ENCODE measurements at regions of chr1 and their contacts with region 1.

Region 1: GRCh38 chr1:204207136-204207616 is 6.6 kb downstream of the GOLT1A start:
- DNase-seq: no peak
- H3K4me3 ChIP-seq: no peak overlapping the region
- CTCF ChIP-seq: peak; percentile 94

Region 2: DNA sequence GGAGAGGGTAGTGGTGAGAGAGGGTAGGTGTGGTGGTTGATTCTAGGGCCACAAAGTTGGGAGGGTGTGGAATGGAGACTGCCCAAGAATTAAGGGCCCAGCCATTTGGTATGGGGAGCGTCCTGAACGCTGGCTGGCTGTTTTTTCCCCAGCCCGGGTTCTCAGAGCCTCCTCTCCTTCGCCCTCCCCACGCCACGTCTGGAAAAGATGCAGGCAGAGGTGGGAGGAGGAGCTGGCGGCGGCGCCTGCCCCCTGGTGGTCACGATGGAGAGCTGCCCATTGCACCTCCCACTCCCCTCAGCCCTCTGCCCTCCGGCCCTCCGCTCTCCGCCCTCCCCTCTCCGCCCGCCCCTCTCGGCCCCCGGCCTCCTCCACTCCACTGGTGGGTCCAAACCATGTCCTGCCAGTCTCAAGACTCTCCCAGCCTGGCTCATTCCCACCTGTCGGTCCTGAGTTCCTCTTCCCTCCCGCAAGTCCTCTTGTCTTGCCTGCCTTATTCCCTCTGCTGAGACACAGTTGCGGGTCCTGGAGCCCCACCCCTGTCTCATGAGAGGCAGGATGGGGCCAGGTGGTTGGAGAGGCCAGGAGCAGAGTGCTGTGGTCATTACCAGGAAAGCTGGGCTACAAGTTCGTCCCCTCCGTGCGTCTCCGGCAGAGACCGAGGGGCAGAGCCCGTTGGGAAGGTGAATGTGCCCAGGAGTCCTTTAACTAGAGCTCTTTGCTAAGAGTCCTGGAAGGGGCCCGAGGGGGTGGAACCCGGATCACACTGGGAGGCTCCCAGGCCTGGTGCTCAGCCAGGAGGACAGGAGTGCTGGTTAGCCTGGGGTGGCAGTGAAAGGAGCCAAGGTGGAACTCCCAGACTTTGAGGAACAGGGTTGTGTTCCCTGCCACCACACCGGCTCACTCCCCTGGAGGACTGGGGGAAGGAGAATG is 77.9 kb before region 1 on chr1:
- CTCF ChIA-PET with region 1: interaction called, 32 read pairs
- POLR2A ChIA-PET with region 1: no interaction called
- DNase-seq: no peak
- H3K4me3 ChIP-seq: no peak overlapping the region
- CTCF ChIP-seq: peak; percentile 96

Region 3: GRCh38 chr1:204180133-204180532 is 27.0 kb before region 1 on chr1:
- CTCF ChIA-PET with region 1: interaction called, 112 read pairs
- POLR2A ChIA-PET with region 1: no interaction called
- DNase-seq: no peak
- H3K4me3 ChIP-seq: no peak overlapping the region
- CTCF ChIP-seq: no peak

Region 4: DNA sequence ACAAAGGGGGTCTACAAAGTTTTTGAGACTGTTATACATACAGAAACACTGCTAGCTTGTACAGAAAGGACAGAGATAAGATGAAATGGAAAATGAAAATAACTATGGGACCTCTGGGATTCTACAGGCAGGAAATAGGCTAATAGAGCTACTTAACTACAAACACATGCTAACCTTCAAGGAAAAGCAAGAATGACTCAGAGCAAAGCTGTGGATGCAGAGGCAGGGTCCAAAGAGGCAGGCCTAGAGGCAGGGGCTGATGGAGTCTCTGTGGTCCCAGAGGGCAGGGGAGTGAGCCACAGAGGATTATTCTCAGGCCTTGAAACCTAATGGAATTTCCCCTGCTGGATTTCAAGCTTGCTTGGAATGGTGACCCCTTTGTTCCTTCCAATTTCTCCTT is 25.4 kb after region 1 on chr1:
- CTCF ChIA-PET with region 1: interaction called, 30 read pairs
- POLR2A ChIA-PET with region 1: no interaction called
- DNase-seq: no peak
- H3K4me3 ChIP-seq: no peak overlapping the region
- CTCF ChIP-seq: no peak

Region 5: GRCh38 chr1:204301186-204301936 is 94.2 kb after region 1 on chr1:
- CTCF ChIA-PET with region 1: interaction called, 15 read pairs
- POLR2A ChIA-PET with region 1: no interaction called
- DNase-seq: no peak
- H3K4me3 ChIP-seq: no peak overlapping the region
- CTCF ChIP-seq: no peak

Region 6: GRCh38 chr1:204363335-204364124 is 156.4 kb after region 1 on chr1:
- CTCF ChIA-PET with region 1: interaction called, 124 read pairs
- POLR2A ChIA-PET with region 1: no interaction called
- DNase-seq: no peak
- H3K4me3 ChIP-seq: peak overlapping the region; percentile 50
- CTCF ChIP-seq: peak; percentile 92

Region 7: DNA sequence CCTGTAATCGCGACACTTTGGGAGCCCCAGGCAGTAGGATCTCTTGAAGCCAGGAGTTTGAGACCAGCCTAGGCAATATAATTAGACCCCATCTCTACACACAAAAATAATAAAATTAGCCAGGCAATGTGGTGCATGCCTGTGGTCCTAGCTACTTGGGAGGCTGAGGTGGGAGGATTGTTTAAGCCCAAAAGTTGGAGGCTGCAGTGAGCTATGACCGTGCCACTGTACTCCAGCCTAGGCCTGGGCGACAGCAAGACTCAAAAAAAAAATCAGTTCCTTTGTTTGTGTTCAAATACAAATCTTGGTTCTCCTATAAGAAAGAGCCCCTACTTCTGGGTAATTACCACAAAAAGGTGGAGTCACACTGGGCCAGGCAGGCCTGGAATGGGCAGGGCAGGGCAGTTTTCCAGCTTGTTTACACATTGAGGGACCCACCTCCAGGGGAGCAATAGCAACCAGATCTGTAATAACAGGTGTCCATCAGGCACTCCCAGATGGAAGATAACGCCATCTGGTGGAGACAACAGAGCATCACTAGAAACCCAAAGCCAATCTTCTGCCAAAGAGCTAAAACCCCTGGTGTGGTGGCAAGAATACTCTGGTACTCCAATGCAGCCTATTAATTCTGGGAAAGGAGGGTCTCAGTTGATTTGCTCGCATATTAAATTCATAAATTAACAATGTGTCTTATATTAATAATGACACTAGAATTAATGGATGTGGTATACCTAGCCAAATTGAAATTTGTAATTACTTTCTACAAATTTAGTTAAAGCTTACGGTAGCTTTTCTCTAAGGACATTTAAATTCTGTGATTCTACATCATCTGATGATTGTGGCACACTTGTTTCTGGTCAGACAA is 191.3 kb after region 1 on chr1:
- CTCF ChIA-PET with region 1: interaction called, 16 read pairs
- POLR2A ChIA-PET with region 1: no interaction called
- DNase-seq: no peak
- H3K4me3 ChIP-seq: no peak overlapping the region
- CTCF ChIP-seq: peak; percentile 74

Region 8: GRCh38 chr1:204446370-204447111 is 239.4 kb after region 1 on chr1:
- CTCF ChIA-PET with region 1: no interaction called
- POLR2A ChIA-PET with region 1: no interaction called
- DNase-seq: no peak
- H3K4me3 ChIP-seq: no peak overlapping the region
- CTCF ChIP-seq: peak; percentile 85

Measured in AG04449 (cell line).